ENCODE measurements at regions of chr12 and their contacts with region 1.

Region 1: DNA sequence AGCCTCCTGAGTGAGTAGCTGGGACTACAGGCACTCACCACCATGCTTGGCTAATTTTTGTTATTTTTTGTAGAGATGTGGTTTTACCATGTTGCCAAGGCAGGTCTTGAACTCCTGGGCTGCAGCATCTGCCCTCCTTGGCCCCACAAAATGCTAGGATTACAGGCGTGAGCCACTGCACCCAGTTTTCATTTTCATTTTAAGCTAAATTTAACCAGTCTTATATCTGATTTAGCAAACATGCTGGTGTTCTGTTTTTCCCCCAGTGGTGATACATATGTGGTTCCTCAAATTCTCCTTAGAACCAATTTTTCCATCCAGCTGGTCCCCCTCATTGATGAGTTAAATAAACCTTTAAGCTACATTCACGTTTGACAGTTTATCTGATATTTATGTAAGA is 43.8 kb upstream of the BICD1 start:
- DNase-seq: no peak
- H3K4me3 ChIP-seq: no peak overlapping the region
- H3K27ac ChIP-seq: no peak overlapping the region
- H3K4me1 ChIP-seq: no peaks in the 10 kb centered on the region
- H3K27me3 ChIP-seq: no peaks in the 10 kb centered on the region
- CTCF ChIP-seq: no peak

Region 2: GRCh38 chr12:31682136-31682962 is 380.5 kb before region 1 on chr12:
- CTCF ChIA-PET with region 1: interaction called, 4 read pairs
- POLR2A ChIA-PET with region 1: no interaction called
- intact Hi-C with region 1: loop called (anchors 1 kb)
- DNase-seq: peak; percentile 68 to 72
- H3K4me3 ChIP-seq: no peak overlapping the region
- H3K27ac ChIP-seq: no peak overlapping the region
- H3K4me1 ChIP-seq: no peaks in the 10 kb centered on the region
- H3K27me3 ChIP-seq: no peaks in the 10 kb centered on the region
- CTCF ChIP-seq: peak; percentile 87

Measured in PC-9 (cell line).